ENCODE measurements at regions of chr1 and their contacts with region 1.

Region 1: GRCh38 chr1:200802865-200803512 is 64.3 kb downstream of the CAMSAP2 start:
- DNase-seq: peak; percentile 48 to 89
- ATAC-seq: peak; percentile 82 to 89 (median 85)
- H3K4me3 ChIP-seq: no peak overlapping the region
- H3K4me3 Mint-ChIP-seq: no peak overlapping the region
- H3K27ac ChIP-seq: no peak overlapping the region
- H3K27ac Mint-ChIP-seq: no peak overlapping the region
- H3K4me1 ChIP-seq: no peaks in the 10 kb centered on the region
- H3K4me1 Mint-ChIP-seq: peaks cover 0 to 6% of the 10 kb centered on the region in 2 donors
- H3K27me3 ChIP-seq: no peaks in the 10 kb centered on the region
- H3K27me3 Mint-ChIP-seq: peaks cover 19 to 27% of the 10 kb centered on the region in 2 donors
- CTCF ChIP-seq: peak; percentile 90

Region 2: DNA sequence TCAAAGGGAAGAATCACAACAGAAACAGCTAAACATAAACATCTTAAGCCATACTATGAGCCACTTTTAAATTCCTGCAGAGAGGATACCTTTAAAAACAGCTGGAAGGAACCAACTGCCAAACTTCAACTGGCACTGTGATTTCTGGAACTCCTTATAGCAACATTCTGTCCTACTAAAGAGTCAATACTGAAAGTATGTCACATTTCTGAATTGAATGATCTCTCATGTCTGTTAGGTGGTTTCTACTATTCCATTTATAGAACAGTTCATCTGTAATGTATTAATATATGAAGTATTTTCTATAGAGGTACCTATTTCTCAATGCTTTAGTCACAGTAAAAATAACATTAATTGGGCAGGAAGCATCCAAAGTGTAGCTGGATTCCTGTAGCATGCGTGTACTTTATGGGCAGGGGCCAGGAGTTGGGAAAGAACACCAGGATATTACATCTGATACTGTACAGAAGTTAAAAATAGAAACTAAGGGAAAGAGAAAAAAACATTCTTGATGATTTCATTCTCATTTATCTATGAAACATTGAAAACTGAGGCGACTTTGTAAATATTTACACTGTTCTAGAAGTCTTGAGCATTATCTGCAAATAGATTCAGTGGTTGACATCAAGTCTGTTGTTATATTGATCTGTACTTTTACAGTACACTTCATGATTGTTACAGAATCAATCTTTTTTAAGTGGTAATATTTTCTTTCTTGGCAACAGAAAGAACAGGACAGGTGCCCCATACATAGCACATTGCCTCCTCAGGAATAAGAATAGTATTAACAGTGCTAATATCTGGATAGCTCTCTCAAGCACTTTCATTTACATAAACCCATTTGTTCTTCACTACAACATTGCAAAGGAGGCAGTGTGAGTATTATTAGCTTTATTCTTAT is 387.0 kb before region 1 on chr1:
- intact Hi-C with region 1: no loop called
- DNase-seq: no peak
- ATAC-seq: no peak
- H3K4me3 ChIP-seq: no peak overlapping the region
- H3K4me3 Mint-ChIP-seq: no peak overlapping the region
- H3K27ac ChIP-seq: no peak overlapping the region
- H3K27ac Mint-ChIP-seq: no peak overlapping the region
- H3K4me1 ChIP-seq: no peaks in the 10 kb centered on the region
- H3K4me1 Mint-ChIP-seq: no peaks in the 10 kb centered on the region
- H3K27me3 ChIP-seq: no peaks in the 10 kb centered on the region
- H3K27me3 Mint-ChIP-seq: peaks cover 22 to 26% of the 10 kb centered on the region in 2 donors
- CTCF ChIP-seq: no peak

Region 3: DNA sequence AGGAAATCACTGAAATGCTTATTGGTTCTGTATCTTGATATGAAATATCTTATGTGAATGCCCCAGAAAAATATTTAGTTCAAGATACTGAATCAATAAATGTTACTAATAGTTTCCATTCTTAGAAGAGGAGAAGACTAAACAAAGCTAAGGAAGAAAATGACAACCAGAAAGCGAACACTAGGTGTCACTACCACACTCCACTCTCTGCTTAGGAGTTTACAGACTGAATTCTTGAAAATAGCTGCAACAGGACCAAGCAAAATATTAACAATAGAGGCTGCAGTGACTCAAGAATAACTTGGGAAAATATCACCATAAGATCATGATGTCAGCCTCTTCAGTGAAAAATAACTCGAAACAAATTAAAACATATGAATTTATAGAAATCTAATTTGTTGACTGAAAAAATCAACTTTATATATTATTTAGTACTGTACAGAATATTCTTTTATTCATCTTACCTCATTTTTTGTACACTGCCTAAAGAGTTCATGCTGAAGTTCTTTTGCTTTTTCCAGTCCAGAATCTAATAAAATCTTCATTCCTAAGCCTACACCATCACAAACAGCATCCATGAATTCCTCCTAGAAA is 244.0 kb before region 1 on chr1:
- intact Hi-C with region 1: loop called (anchors 1 kb)
- DNase-seq: peak in 1 of 2 donors; percentile 61
- ATAC-seq: peak in 1 of 3 donors; percentile 45
- H3K4me3 ChIP-seq: no peak overlapping the region
- H3K4me3 Mint-ChIP-seq: no peak overlapping the region
- H3K27ac ChIP-seq: no peak overlapping the region
- H3K27ac Mint-ChIP-seq: no peak overlapping the region
- H3K4me1 ChIP-seq: no peaks in the 10 kb centered on the region
- H3K4me1 Mint-ChIP-seq: no peaks in the 10 kb centered on the region
- H3K27me3 ChIP-seq: no peaks in the 10 kb centered on the region
- H3K27me3 Mint-ChIP-seq: no peaks in the 10 kb centered on the region
- CTCF ChIP-seq: peak; percentile 59

Region 4: DNA sequence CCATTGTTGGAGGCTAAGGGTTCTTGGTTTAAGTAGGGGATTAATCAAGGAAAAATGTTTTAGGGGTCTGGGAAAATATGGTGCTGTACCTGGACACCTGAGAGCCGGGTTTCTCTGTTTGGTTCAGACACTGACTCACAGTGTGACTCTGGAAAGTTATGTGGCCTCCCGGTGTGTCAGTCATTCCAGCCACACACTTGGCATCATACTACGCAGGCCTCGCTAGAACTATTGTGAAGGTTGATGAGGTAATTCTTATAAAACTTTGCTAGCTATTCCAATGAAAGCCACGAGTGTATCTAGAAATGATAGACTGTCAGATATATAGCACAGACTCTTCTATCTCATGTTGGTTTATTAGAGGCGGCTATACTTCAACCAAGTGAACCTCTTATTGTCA is 69.1 kb before region 1 on chr1:
- intact Hi-C with region 1: no loop called
- DNase-seq: no peak
- ATAC-seq: no peak
- H3K4me3 ChIP-seq: no peak overlapping the region
- H3K4me3 Mint-ChIP-seq: no peak overlapping the region
- H3K27ac ChIP-seq: no peak overlapping the region
- H3K27ac Mint-ChIP-seq: no peak overlapping the region
- H3K4me1 ChIP-seq: peaks cover 5% of the 10 kb centered on the region
- H3K4me1 Mint-ChIP-seq: peaks cover 12 to 13% of the 10 kb centered on the region in 2 donors
- H3K27me3 ChIP-seq: peaks cover 4% of the 10 kb centered on the region
- H3K27me3 Mint-ChIP-seq: peaks cover 21% of the 10 kb centered on the region in 2 donors
- CTCF ChIP-seq: no peak

Region 5: DNA sequence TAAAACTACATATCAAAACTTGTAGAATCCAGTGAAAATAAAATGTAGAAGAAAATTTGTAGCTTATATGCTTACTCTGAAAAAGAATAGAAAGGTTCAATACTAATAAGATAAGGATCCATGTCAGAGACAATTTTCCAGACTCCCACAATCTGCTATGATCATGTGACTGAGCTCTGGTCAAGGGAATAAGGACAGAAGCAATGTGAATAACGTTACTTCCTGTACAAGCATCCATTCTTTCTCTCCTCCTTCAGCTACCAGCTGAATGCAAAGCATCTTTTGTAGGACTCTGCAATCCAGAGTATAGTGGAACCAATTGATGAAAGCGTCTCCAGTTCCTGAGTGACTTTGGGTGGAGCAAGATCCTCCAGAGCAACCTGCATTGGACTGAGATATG is 441.0 kb after region 1 on chr1:
- intact Hi-C with region 1: no loop called
- DNase-seq: no peak
- ATAC-seq: no peak
- H3K4me3 ChIP-seq: no peak overlapping the region
- H3K4me3 Mint-ChIP-seq: no peak overlapping the region
- H3K27ac ChIP-seq: no peak overlapping the region
- H3K27ac Mint-ChIP-seq: no peak overlapping the region
- H3K4me1 ChIP-seq: no peaks in the 10 kb centered on the region
- H3K4me1 Mint-ChIP-seq: no peaks in the 10 kb centered on the region
- H3K27me3 ChIP-seq: peaks cover 17% of the 10 kb centered on the region
- H3K27me3 Mint-ChIP-seq: peaks cover 32 to 55% of the 10 kb centered on the region in 2 donors
- CTCF ChIP-seq: no peak

Region 6: GRCh38 chr1:202135221-202135721 is 1332.3 kb after region 1 on chr1:
- intact Hi-C with region 1: no loop called
- DNase-seq: peak; percentile 40 to 79
- ATAC-seq: peak; percentile 82 to 95 (median 90)
- H3K4me3 ChIP-seq: no peak overlapping the region
- H3K4me3 Mint-ChIP-seq: no peak overlapping the region
- H3K27ac ChIP-seq: no peak overlapping the region
- H3K27ac Mint-ChIP-seq: peak overlapping the region in 1 of 2 donors; percentile 14
- H3K4me1 ChIP-seq: no peaks in the 10 kb centered on the region
- H3K4me1 Mint-ChIP-seq: peaks cover 8 to 19% of the 10 kb centered on the region in 2 donors
- H3K27me3 ChIP-seq: no peaks in the 10 kb centered on the region
- H3K27me3 Mint-ChIP-seq: no peaks in the 10 kb centered on the region
- CTCF ChIP-seq: peak; percentile 86